ENCODE measurements at regions of chr10 and their contacts with region 1.

Region 1: DNA sequence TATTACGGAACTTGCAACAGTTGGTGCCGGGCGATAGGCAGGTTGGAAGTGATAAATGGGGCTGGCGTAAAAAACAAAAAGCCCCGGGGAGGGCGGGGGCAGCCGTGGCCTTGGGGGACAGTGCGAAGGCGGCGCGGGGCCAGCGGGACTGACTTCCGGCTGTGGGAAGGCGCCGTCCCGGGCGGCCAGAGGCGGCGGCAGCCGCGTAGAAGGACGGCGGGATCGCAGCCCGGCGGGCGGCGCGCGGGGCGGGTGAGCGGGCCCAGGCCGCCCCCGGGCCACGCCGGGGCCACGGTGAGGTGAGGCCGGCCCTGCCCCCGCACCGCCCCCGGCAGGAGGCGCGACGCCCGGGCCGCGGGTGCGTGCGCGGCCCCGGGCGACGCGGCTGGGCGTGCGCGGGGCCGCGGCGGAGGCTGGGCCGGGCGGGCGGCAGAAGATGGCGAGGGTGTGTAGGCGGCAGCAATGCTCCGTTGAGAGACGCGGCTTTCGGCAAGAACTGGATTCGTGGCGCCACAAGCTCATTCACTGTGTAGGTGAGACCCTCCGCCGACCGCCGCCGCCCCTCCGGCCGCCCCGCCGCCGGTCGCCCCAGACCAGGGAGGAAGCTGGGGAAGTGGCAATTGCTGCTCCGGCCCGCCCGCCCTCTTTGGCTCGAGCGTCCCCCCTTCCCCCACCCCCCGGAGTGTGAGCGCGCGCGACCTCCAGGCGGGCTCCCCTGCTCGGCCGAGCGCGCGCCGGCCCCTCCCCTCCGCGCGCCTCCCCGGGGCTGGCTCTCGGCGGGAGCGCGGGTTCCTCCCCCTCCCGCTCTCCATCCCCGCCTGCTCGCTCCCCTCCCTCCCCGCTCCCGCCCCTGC is at the start of gene LCOR:
- DNase-seq: peak; percentile 82 to 92
- ATAC-seq: peak; percentile 69 to 86 (median 72)
- H3K4me3 ChIP-seq: peak within 1 kb of the TSS; percentile 73
- H3K4me3 Mint-ChIP-seq: peak within 1 kb of the TSS; percentile 98
- H3K27ac ChIP-seq: peak within 1 kb of the TSS; percentile 84
- H3K27ac Mint-ChIP-seq: peak within 1 kb of the TSS; percentile 99
- H3K4me1 ChIP-seq: peaks cover 14% of the 10 kb centered on the region
- H3K4me1 Mint-ChIP-seq: peaks cover 45% of the 10 kb centered on the region in 2 donors
- H3K27me3 ChIP-seq: no peaks in the 10 kb centered on the region
- H3K27me3 Mint-ChIP-seq: no peaks in the 10 kb centered on the region
- CTCF ChIP-seq: no peak
- total RNA-seq, gene LCOR: 68.5 to 92.4 (median 87.7) TPM

Region 2: GRCh38 chr10:96586419-96587263 is 245.5 kb before region 1 on chr10 and contains the start of gene TM9SF3:
- intact Hi-C with region 1: loop called (anchors 2 kb)
- DNase-seq: peak; percentile 90 to 96
- ATAC-seq: peak; percentile 82 to 95 (median 88)
- H3K4me3 ChIP-seq: peak within 1 kb of the TSS; percentile 96
- H3K4me3 Mint-ChIP-seq: peak within 1 kb of the TSS; percentile 97
- H3K27ac ChIP-seq: peak within 1 kb of the TSS; percentile 99
- H3K27ac Mint-ChIP-seq: peak within 1 kb of the TSS in 1 of 2 donors; percentile 97
- H3K4me1 ChIP-seq: peaks cover 21% of the 10 kb centered on the region
- H3K4me1 Mint-ChIP-seq: peaks cover 31 to 39% of the 10 kb centered on the region in 2 donors
- H3K27me3 ChIP-seq: no peaks in the 10 kb centered on the region
- H3K27me3 Mint-ChIP-seq: no peaks in the 10 kb centered on the region
- CTCF ChIP-seq: no peak
- total RNA-seq, gene TM9SF3: 113 to 119 (median 117) TPM

Region 3: GRCh38 chr10:96752375-96752774 is 79.7 kb before region 1 on chr10:
- intact Hi-C with region 1: no loop called
- DNase-seq: no peak
- ATAC-seq: no peak
- H3K4me3 ChIP-seq: no peak overlapping the region
- H3K4me3 Mint-ChIP-seq: no peak overlapping the region
- H3K27ac ChIP-seq: no peak overlapping the region
- H3K27ac Mint-ChIP-seq: no peak overlapping the region
- H3K4me1 ChIP-seq: peaks cover 31% of the 10 kb centered on the region
- H3K4me1 Mint-ChIP-seq: peaks cover 22 to 25% of the 10 kb centered on the region in 2 donors
- H3K27me3 ChIP-seq: no peaks in the 10 kb centered on the region
- H3K27me3 Mint-ChIP-seq: no peaks in the 10 kb centered on the region
- CTCF ChIP-seq: no peak

Region 4: DNA sequence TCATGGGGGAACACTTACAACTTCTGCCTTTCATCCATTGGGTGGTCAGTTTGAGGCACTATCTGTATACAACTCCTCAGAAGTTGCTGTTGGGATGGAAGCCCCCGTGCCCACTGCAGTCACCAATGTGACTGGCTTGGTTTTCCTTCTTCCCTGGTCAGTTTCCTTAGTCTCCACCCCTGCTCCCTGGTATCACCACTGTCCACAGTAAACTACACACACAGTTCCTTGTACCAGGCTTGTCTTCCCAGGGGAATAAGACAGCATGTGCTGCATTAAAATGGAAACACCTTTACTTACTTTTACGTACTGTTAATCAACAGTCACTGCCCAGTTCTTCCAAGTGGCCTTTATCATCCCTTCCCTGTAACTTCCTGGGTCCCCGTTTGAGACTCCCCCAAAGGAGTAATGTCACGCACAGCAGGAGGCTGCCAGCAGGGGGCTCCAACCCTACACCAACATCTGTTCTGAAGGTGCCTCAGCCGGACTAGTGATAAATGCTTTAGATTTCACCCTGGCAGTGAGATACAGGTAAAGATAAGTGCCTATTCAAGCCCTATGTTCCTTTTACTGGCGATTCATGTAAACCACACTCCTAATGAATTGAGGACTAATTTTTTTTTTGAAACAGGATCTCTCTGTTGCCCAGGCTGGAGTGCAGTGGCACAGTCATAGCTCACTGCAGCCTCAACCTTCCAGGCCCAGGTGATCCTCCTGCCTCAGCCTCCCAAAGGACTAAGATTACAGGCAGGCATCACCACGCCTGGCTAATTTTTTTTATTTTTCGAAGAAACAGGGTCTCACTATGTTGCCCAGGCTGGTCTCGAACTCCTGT is 66.5 kb before region 1 on chr10:
- intact Hi-C with region 1: loop called (anchors 1 kb)
- DNase-seq: peak; percentile 73 to 85
- ATAC-seq: peak; percentile 92 to 100 (median 99)
- H3K4me3 ChIP-seq: no peak overlapping the region
- H3K4me3 Mint-ChIP-seq: no peak overlapping the region
- H3K27ac ChIP-seq: no peak overlapping the region
- H3K27ac Mint-ChIP-seq: peak overlapping the region in 1 of 2 donors; percentile 47
- H3K4me1 ChIP-seq: peaks cover 15% of the 10 kb centered on the region
- H3K4me1 Mint-ChIP-seq: peaks cover 8 to 9% of the 10 kb centered on the region in 2 donors
- H3K27me3 ChIP-seq: no peaks in the 10 kb centered on the region
- H3K27me3 Mint-ChIP-seq: no peaks in the 10 kb centered on the region
- CTCF ChIP-seq: peak; percentile 77